MCF 10A (cell line): ENCODE measurements at regions of chr3 and their contacts with region 1.

Region 1: DNA sequence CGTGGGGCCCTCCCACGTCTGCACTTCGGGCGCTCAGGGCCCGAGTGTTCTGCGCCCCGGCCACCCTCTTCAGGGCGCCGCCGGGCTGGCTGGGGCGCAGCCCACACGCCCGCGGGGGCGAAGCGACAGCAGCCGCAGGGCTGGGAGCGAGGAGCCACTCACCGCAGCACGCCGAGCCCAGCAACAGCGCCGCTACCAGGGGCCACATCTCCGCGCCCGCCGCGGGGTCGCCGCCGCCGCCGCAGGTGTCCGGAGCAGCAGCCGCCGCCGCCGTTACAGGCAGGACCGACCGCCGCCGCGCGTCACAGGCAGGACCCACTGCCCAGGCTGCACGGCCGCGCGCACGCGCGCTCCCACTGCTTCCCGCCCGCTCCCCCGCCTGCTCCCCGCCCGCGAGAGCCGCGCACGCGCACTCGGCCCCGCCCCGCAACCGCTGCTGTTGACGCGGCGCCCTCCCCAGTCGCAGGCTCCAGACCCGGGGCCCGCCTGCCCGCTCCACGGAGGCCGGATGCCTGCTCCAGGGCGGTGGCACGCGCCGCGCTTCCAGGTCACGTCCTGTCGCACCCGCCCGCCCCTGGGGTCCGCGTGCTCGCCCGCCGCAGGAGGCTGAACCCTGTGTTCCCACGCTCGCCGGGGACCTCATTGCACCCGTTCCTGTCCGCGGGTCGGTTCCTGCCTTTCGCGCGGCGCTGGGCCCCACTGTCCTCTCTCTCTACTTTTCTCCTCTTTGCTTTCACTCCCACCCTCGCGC is at the start of gene CD47:
- DNase-seq: peak; percentile 79
- H3K4me3 Mint-ChIP-seq: peak within 1 kb of the TSS; percentile 95
- H3K27ac Mint-ChIP-seq: peak within 1 kb of the TSS; percentile 88
- H3K4me1 Mint-ChIP-seq: peaks cover 5% of the 10 kb centered on the region
- H3K27me3 Mint-ChIP-seq: no peaks in the 10 kb centered on the region
- CTCF ChIP-seq: no peak
- total RNA-seq, gene CD47: 28.5 and 31.5 TPM in 2 replicates

Region 2: DNA sequence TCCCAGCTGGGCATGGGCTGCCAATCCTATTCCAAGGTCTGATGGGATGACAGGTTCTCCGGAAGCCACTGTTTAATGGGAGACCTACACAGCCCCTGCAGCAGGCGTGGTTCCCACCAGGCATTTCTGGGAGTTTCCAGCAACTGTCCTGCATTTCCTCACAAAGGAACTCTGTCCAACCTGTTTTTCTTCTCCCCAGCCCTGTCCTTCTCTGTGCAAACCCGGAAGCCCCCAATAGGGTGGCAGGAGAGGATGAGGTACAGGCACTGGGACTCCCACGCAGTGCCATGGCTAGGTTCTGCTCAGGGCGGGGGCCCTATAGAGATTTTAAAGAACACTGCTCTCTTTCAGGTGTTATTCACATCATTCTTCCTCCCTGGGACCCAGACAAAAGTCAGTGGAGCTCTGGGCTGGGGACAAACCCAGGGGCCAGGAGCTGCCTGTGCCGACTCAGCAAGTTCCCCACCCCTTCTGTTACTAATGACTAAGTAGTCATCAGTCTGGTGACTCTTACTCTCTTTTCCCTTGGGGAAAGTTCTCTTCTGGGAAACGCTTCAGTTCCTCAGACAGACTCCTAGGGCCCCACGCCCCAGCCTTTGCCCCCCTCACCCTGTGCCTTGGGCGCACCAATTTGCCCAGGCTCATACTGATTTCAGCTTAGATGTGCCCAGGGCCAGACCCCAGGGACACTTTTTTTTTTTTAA is 97.7 kb before region 1 on chr3:
- CTCF ChIA-PET with region 1: no interaction called
- POLR2A ChIA-PET with region 1: interaction called, 11 read pairs
- intact Hi-C with region 1: no loop called
- DNase-seq: peak; percentile 36
- H3K4me3 Mint-ChIP-seq: no peak overlapping the region
- H3K27ac Mint-ChIP-seq: peak overlapping the region; percentile 3
- H3K4me1 Mint-ChIP-seq: peaks cover 35% of the 10 kb centered on the region
- H3K27me3 Mint-ChIP-seq: no peaks in the 10 kb centered on the region
- CTCF ChIP-seq: no peak

Region 3: GRCh38 chr3:108067768-108068167 is 23.1 kb before region 1 on chr3:
- CTCF ChIA-PET with region 1: no interaction called
- POLR2A ChIA-PET with region 1: no interaction called
- intact Hi-C with region 1: no loop called
- DNase-seq: no peak
- H3K4me3 Mint-ChIP-seq: no peak overlapping the region
- H3K27ac Mint-ChIP-seq: no peak overlapping the region
- H3K4me1 Mint-ChIP-seq: peaks cover 6% of the 10 kb centered on the region
- H3K27me3 Mint-ChIP-seq: no peaks in the 10 kb centered on the region
- CTCF ChIP-seq: no peak

Region 4: DNA sequence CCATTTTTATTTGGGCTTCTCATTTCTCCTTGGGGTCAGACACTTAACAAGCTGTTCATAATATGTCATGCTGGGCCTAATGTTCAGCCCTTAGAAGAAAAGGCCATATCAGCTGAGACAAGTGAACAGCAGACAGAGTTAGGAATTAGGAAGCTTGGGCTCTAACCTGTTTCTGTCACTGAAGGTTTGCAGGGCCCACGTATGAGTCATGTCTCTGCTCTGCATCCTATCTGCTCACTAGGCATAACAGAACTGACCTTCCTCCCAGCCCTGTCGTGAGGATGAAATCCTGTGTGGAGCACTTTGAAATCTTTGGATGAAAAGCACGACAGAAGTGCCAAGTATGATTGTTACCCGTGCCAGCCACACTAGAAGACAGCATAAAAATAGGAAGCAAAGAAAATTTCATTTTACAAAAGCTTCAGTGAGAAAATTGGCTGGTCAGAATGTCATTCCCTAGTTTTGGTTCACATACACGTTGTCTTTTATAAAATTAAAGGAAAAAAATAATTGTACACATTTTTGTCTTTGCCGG is 26.4 kb after region 1 on chr3:
- CTCF ChIA-PET with region 1: no interaction called
- POLR2A ChIA-PET with region 1: no interaction called
- intact Hi-C with region 1: no loop called
- DNase-seq: peak; percentile 29
- H3K4me3 Mint-ChIP-seq: no peak overlapping the region
- H3K27ac Mint-ChIP-seq: no peak overlapping the region
- H3K4me1 Mint-ChIP-seq: no peaks in the 10 kb centered on the region
- H3K27me3 Mint-ChIP-seq: no peaks in the 10 kb centered on the region
- CTCF ChIP-seq: no peak

Region 5: GRCh38 chr3:108130701-108131474 is 40.0 kb after region 1 on chr3:
- CTCF ChIA-PET with region 1: no interaction called
- POLR2A ChIA-PET with region 1: interaction called, 27 read pairs
- intact Hi-C with region 1: no loop called
- DNase-seq: peak; percentile 74
- H3K4me3 Mint-ChIP-seq: peak overlapping the region; percentile 7
- H3K27ac Mint-ChIP-seq: peak overlapping the region; percentile 69
- H3K4me1 Mint-ChIP-seq: peaks cover 33% of the 10 kb centered on the region
- H3K27me3 Mint-ChIP-seq: no peaks in the 10 kb centered on the region
- CTCF ChIP-seq: no peak

Region 6: DNA sequence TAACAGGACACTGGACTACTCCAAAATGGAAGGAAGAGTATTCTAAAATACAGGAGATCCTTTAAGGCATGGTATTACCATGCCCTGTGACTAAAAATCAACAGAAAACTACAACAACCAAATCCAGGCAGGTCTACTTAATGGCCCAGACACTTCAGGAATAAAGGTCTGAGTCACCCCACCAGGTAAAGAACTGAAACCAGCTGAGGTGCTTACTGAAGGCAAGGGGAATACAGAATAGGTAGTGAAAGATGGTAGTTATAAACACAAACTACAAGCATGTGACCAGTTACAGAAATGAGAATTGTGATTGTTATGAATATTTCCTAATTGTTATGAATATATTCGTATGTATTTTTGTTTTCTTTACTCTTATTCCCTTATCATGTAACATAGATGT is 118.0 kb after region 1 on chr3:
- CTCF ChIA-PET with region 1: no interaction called
- POLR2A ChIA-PET with region 1: no interaction called
- intact Hi-C with region 1: no loop called
- DNase-seq: no peak
- H3K4me3 Mint-ChIP-seq: no peak overlapping the region
- H3K27ac Mint-ChIP-seq: no peak overlapping the region
- H3K4me1 Mint-ChIP-seq: no peaks in the 10 kb centered on the region
- H3K27me3 Mint-ChIP-seq: no peaks in the 10 kb centered on the region
- CTCF ChIP-seq: no peak

Region 7: DNA sequence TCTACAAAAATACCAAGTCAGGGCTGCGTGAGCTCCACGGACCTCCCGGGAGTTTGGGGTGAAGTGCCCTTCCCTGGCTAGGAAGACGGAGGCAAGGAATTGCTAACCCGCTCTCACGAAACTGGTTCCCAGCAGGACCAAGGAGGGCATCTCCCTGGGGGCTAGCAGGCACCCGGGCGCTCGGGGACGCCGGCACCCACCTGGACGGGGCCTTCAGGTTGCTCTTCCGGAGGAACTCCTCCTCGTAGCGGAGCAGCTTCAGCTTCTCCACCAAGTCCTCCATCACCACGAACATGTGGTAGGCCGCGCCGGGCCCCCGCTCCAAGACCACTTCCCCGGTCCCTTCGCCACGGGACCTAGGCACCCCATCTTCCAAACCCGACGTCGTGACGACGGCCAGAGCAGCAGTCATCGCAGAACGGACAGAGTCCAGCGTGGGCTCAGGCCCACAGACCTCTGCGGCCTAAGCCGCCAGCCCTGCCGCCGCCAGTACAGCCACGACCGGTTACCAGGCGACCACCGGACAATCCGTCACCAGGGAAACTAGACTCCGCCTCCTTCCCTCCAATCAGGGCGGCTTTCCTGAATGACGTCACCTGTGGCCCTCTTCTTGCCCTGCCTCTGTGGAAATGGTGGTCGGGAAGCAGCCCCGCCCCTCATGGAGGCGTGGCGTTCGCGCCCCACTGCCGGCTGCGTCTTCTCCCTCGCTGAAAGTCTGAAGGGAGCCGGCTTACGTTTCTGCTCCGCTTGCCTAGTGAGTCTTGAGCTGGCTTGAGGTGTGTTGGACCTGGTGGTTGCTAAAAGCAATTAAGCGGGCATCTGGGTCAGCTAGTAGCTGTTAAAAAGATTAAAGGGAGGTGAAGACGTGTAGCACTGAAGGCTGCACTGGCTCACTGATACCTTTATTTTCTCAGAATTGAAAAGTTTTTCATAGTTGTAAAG is 131.3 kb after region 1 on chr3 and contains the start of gene IFT57:
- CTCF ChIA-PET with region 1: no interaction called
- POLR2A ChIA-PET with region 1: interaction called, 21 read pairs
- intact Hi-C with region 1: loop called (anchors 2 kb)
- DNase-seq: peak; percentile 97
- H3K4me3 Mint-ChIP-seq: peak within 1 kb of the TSS; percentile 100
- H3K27ac Mint-ChIP-seq: peak within 1 kb of the TSS; percentile 100
- H3K4me1 Mint-ChIP-seq: peaks cover 31% of the 10 kb centered on the region
- H3K27me3 Mint-ChIP-seq: no peaks in the 10 kb centered on the region
- CTCF ChIP-seq: no peak
- total RNA-seq, gene IFT57: 38.9 and 46.6 TPM in 2 replicates

Region 8: GRCh38 chr3:108477511-108478147 is 386.8 kb after region 1 on chr3:
- CTCF ChIA-PET with region 1: interaction called, 4 read pairs
- POLR2A ChIA-PET with region 1: interaction called, 3 read pairs
- intact Hi-C with region 1: loop called (anchors 1 kb)
- DNase-seq: peak; percentile 77
- H3K4me3 Mint-ChIP-seq: no peak overlapping the region
- H3K27ac Mint-ChIP-seq: no peak overlapping the region
- H3K4me1 Mint-ChIP-seq: no peaks in the 10 kb centered on the region
- H3K27me3 Mint-ChIP-seq: no peaks in the 10 kb centered on the region
- CTCF ChIP-seq: peak; percentile 62